Endothelial cell of umbilical vein (primary cell): ENCODE measurements at regions of chr7 and their contacts with region 1.

Region 1: GRCh38 chr7:135645296-135645904 is 16.9 kb upstream of the STMP1 start:
- DNase-seq: peak; percentile 60
- H3K4me3 ChIP-seq: no peak overlapping the region
- H3K27ac ChIP-seq: no peak overlapping the region
- H3K4me1 ChIP-seq: no peaks in the 10 kb centered on the region
- H3K27me3 ChIP-seq: no peaks in the 10 kb centered on the region
- CTCF ChIP-seq: peak; percentile 35 to 57
- POLR2A ChIP-seq: no peak

Region 2: DNA sequence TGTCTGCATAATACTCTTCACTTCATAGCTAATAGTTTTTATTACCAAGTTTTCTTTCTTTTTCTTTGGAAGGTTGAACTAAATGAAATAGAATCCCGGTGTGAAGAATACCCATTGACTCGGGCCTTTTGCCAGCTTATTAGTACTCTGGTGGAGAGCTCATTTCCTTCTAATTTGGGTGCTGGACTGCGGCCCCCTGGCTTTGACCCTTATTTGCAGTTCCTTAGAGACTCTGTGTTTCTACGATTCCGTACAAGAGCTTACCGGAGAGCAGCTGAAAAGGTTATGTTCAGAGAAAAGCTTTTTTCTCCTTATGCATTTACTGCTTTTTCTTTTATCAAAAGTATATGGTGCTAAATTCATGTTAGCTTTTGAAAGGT is 47.5 kb before region 1 on chr7:
- CTCF ChIA-PET with region 1: interaction called, 10 read pairs
- POLR2A ChIA-PET with region 1: no interaction called
- dilution Hi-C with region 1: no loop called
- intact Hi-C with region 1: no loop called
- DNase-seq: no peak
- H3K4me3 ChIP-seq: no peak overlapping the region
- H3K27ac ChIP-seq: no peak overlapping the region
- H3K4me1 ChIP-seq: no peaks in the 10 kb centered on the region
- H3K27me3 ChIP-seq: no peaks in the 10 kb centered on the region
- CTCF ChIP-seq: no peak
- POLR2A ChIP-seq: no peak

Region 3: DNA sequence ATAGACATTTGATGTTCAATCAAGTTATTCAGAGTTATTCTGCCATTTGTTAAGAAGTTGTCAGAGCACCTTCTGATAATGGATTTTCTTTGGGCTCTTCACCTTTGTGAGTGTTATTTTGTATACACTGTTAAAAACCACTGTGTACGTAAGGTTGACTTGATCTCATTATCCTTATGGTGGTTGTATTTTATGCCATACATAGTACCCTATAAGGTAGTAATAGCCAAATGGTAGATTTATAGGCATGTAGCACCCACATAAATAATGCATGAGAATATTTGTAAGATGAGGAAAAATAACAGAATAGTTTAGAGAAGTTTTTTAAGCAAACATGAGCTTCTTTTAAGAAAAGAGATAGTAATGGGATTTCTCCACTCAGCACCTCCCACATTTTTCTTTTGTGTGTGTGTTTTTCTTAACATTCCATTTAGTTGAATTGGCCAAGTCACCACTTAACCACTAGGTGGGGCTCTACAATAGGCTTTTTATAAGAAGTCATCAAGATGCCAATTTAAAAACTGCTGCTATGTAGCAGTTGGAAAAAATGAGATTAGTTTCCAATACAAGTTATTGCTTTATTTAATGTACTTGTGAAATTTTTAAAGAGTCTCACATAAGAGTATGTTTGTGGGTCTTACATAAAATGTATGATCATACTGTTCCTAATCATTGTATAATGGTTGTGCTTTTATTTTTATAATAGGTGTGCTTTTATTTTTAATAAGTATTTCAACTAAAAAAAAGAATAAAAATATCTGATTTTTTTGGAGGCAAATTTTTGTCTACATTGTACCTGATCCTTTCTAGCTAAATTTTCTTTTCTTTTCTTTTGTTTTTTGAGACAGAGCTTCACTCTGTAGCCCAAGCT is 24.2 kb before region 1 on chr7:
- CTCF ChIA-PET with region 1: interaction called, 31 read pairs
- POLR2A ChIA-PET with region 1: no interaction called
- dilution Hi-C with region 1: no loop called
- intact Hi-C with region 1: loop called (anchors 1 kb)
- DNase-seq: peak; percentile 82
- H3K4me3 ChIP-seq: no peak overlapping the region
- H3K27ac ChIP-seq: no peak overlapping the region
- H3K4me1 ChIP-seq: no peaks in the 10 kb centered on the region
- H3K27me3 ChIP-seq: no peaks in the 10 kb centered on the region
- CTCF ChIP-seq: peak; percentile 64 to 69
- POLR2A ChIP-seq: no peak

Region 4: DNA sequence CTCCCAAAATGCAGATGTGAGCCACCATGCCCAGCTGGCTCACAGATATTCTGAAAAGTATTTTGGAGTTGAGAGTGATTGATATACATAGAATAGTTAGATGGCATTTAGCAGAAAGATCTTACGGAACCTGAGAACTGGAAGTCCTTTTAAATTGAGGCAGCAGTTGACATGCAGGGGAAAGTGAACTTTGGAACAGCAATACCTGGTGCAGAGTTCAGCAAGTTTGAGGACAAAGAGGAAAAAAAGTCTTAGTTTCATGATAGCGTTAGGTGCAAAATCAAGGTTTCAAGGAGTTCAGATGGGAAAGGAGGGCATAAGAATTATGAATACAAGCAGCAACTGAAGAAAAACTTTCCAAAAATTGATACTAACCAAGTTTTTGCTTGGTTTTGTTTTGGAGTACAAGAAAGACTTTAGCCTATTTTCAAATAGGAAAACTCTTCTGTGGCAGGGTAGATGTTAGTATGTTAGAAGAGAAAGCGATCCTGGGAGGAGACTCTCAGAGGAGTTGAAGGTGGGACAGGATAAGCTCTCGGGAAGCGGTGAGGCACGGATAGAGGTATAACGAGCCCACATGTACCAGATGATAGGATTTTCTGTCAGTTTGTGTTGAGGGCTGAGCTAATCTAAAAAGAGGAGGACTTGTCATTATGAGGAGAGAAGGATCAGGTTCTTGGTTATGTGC is 11.1 kb before region 1 on chr7:
- CTCF ChIA-PET with region 1: interaction called, 31 read pairs
- POLR2A ChIA-PET with region 1: no interaction called
- dilution Hi-C with region 1: no loop called
- intact Hi-C with region 1: no loop called
- DNase-seq: no peak
- H3K4me3 ChIP-seq: no peak overlapping the region
- H3K27ac ChIP-seq: no peak overlapping the region
- H3K4me1 ChIP-seq: no peaks in the 10 kb centered on the region
- H3K27me3 ChIP-seq: no peaks in the 10 kb centered on the region
- CTCF ChIP-seq: no peak
- POLR2A ChIP-seq: no peak

Region 5: GRCh38 chr7:135662373-135663114 is 17.1 kb after region 1 on chr7 and contains the start of gene STMP1:
- CTCF ChIA-PET with region 1: interaction called, 28 read pairs
- POLR2A ChIA-PET with region 1: no interaction called
- dilution Hi-C with region 1: no loop called
- intact Hi-C with region 1: no loop called
- DNase-seq: peak; percentile 95
- H3K4me3 ChIP-seq: peak within 1 kb of the TSS; percentile 68 to 91 (median 86)
- H3K27ac ChIP-seq: peak within 1 kb of the TSS; percentile 91
- H3K4me1 ChIP-seq: peaks cover 36% of the 10 kb centered on the region
- H3K27me3 ChIP-seq: no peaks in the 10 kb centered on the region
- CTCF ChIP-seq: peak in 1 of 2 donors; percentile 77
- POLR2A ChIP-seq: peak; percentile 96
- total RNA-seq, gene STMP1: 21.4 and 31.3 TPM in 2 replicates

Region 6: GRCh38 chr7:135684136-135684535 is 38.7 kb after region 1 on chr7:
- CTCF ChIA-PET with region 1: no interaction called
- POLR2A ChIA-PET with region 1: no interaction called
- dilution Hi-C with region 1: no loop called
- intact Hi-C with region 1: no loop called
- DNase-seq: no peak
- H3K4me3 ChIP-seq: no peak overlapping the region
- H3K27ac ChIP-seq: no peak overlapping the region
- H3K4me1 ChIP-seq: peaks cover 16% of the 10 kb centered on the region
- H3K27me3 ChIP-seq: no peaks in the 10 kb centered on the region
- CTCF ChIP-seq: no peak
- POLR2A ChIP-seq: no peak